ENCODE measurements at regions of chr15 and their contacts with region 1.

Region 1: GRCh38 chr15:43903864-43904290 is 77.1 kb downstream of the WDR76 start:
- DNase-seq: peak; percentile 68 to 88
- H3K4me3 ChIP-seq: no peak overlapping the region
- H3K4me1 ChIP-seq: no peaks in the 10 kb centered on the region
- H3K27me3 ChIP-seq: no peaks in the 10 kb centered on the region

Region 2: GRCh38 chr15:44053458-44053857 is 149.6 kb after region 1 on chr15:
- in situ Hi-C with region 1: no loop called
- DNase-seq: no peak
- H3K4me3 ChIP-seq: no peak overlapping the region
- H3K4me1 ChIP-seq: no peaks in the 10 kb centered on the region
- H3K27me3 ChIP-seq: peaks cover 10% of the 10 kb centered on the region

Region 3: DNA sequence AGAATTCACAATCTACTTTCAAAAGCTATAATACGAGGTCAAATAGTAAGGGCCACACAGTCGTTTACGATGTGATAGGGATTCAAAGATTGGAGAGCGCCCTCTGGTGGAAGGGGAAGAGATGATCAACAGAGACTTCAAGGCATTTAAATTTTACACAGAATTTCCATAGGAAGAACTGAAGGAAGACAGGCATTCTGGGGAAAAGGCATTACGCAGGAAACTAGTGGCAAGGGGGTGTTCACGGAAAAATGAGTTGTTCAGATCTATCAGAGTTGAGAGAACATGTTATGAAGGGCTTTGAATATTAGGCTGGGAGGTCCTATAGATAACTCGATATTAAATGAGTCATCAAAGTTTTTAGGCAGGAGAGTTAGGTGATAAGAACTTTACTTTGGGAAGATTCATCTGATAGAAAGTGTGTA is 162.5 kb after region 1 on chr15:
- in situ Hi-C with region 1: loop called (anchors 10 kb)
- DNase-seq: peak; percentile 46 to 81
- H3K4me3 ChIP-seq: no peak overlapping the region
- H3K4me1 ChIP-seq: peaks cover 6% of the 10 kb centered on the region
- H3K27me3 ChIP-seq: no peaks in the 10 kb centered on the region

Region 4: GRCh38 chr15:44215594-44215993 is 311.7 kb after region 1 on chr15:
- in situ Hi-C with region 1: loop called (anchors 5 kb)
- DNase-seq: no peak
- H3K4me3 ChIP-seq: no peak overlapping the region
- H3K4me1 ChIP-seq: no peaks in the 10 kb centered on the region; the same call in 1 of the 2 replicates
- H3K27me3 ChIP-seq: no peaks in the 10 kb centered on the region

Measured in HAP-1 (cell line).